GM12878 (cell line): ENCODE measurements at regions of chr12 and their contacts with region 1.

Region 1: DNA sequence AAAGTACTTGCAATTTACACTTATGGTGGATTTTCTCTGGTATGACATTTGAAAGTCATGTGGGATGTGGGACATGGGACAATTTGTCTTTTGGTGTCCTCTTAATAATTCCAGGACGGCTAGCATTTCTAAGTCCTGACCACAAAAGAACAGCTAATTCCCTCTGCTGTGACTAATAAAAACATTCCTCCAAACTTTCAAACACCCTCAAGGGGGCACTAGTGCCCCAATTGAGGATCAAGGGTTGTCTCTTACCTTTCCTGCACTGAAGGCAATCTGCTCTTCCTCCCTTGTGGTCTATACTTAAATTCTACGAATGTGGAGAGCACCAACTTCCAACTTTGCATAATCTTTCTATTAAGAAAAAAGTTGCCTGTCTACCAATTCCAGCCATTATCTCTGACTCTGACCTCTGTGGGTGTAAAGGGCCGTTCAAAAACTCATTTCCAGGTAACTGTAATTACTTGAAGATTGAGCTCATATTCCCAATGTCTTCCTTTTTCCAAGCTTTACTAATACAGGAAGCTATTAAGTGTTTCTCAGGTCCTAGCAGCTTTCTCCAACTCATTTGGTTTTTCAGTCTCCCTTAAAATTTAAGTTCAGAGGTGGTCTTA is 210.2 kb downstream of the PTPRO start:
- DNase-seq: peak; percentile 36
- ATAC-seq: peak; percentile 89
- H3K4me3 ChIP-seq: no peak overlapping the region
- H3K27ac ChIP-seq: no peak overlapping the region
- H3K4me1 ChIP-seq: no peaks in the 10 kb centered on the region; the same call in 1 of the 2 replicates
- H3K27me3 ChIP-seq: no peaks in the 10 kb centered on the region; a peak in 1 of 4 replicates
- CTCF ChIP-seq: peak; percentile 57 to 89 (median 62)
- EP300 ChIP-seq: no peak
- POLR2A ChIP-seq: no peak
- RAD21 ChIP-seq: peak; percentile 98

Region 2: DNA sequence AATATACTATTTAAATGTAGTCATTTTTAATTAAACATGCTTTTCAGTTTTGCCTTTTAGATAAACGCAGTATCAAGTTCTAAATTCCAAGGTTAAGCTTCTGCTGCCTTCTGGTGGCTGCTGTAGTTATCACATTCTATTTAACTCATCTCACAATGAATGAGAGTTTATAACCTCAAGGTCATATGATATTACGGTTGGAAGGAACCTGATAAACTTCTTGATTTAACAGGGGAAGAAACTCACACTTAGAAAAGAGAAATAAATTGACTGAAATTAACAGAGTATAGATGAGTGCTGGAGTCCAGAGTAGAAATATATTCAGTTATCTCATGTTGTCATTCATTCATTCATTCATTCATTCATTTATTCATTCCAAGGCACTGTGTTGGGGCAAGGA is 868.0 kb before region 1 on chr12:
- CTCF ChIA-PET with region 1: no interaction called
- POLR2A ChIA-PET with region 1: no interaction called
- RAD21 ChIA-PET with region 1: no interaction called
- SMC1A ChIA-PET with region 1: no interaction called
- in situ Hi-C with region 1: no loop called
- intact Hi-C with region 1: no loop called
- DNase-seq: no peak
- ATAC-seq: peak; percentile 71
- H3K4me3 ChIP-seq: no peak overlapping the region
- H3K27ac ChIP-seq: no peak overlapping the region
- H3K4me1 ChIP-seq: no peaks in the 10 kb centered on the region
- H3K27me3 ChIP-seq: no peaks in the 10 kb centered on the region
- CTCF ChIP-seq: peak; percentile 50 to 72 (median 56); a peak in 5 of 6 replicates
- EP300 ChIP-seq: no peak
- POLR2A ChIP-seq: no peak
- RAD21 ChIP-seq: peak; percentile 93

Region 3: DNA sequence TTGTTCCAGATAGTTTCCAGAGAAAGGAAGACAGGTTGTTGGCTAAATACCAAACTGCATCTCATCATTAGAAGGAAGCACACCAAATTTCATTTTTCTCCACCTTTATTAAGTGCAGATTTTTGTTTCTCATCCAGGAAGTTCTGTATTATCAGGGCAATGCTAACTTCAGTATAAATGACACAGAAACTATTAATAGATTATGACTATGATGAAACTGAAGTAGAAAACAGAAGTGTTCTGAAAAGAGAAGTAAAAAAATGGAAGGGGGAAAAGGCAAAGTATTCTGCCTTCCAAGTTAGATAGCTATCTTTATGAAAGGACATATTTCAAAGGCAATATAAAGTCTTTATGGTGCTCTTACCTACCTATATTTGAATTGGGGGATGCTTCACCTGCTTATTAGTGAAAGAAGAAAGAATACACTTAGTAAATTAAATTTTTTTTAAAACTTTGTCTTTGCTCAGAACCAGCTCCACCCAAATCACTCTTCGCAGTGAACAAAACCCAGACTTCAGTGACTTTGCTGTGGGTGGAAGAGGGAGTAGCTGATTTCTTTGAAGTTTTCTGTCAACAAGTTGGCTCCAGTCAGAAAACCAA is 13.7 kb after region 1 on chr12:
- CTCF ChIA-PET with region 1: interaction called, 116 read pairs
- POLR2A ChIA-PET with region 1: interaction called, 11 read pairs
- RAD21 ChIA-PET with region 1: interaction called, 44 read pairs
- SMC1A ChIA-PET with region 1: interaction called, 47 read pairs
- in situ Hi-C with region 1: no loop called
- intact Hi-C with region 1: no loop called
- DNase-seq: peak; percentile 25
- ATAC-seq: peak; percentile 87
- H3K4me3 ChIP-seq: peak overlapping the region; percentile 52
- H3K27ac ChIP-seq: peak overlapping the region; percentile 66
- H3K4me1 ChIP-seq: peaks cover 19% of the 10 kb centered on the region
- H3K27me3 ChIP-seq: no peaks in the 10 kb centered on the region
- CTCF ChIP-seq: no peak
- EP300 ChIP-seq: no peak
- POLR2A ChIP-seq: no peak
- RAD21 ChIP-seq: no peak

Region 4: GRCh38 chr12:15575671-15576541 is 43.4 kb after region 1 on chr12:
- CTCF ChIA-PET with region 1: interaction called, 1,078 read pairs
- POLR2A ChIA-PET with region 1: interaction called, 7 read pairs
- RAD21 ChIA-PET with region 1: interaction called, 50 read pairs
- SMC1A ChIA-PET with region 1: interaction called, 853 read pairs
- in situ Hi-C with region 1: loop called (anchors 5 kb)
- intact Hi-C with region 1: loop called (anchors 1 kb)
- DNase-seq: no peak
- ATAC-seq: no peak
- H3K4me3 ChIP-seq: no peak overlapping the region
- H3K27ac ChIP-seq: no peak overlapping the region
- H3K4me1 ChIP-seq: peaks cover 7% of the 10 kb centered on the region
- H3K27me3 ChIP-seq: no peaks in the 10 kb centered on the region
- CTCF ChIP-seq: no peak
- EP300 ChIP-seq: no peak
- POLR2A ChIP-seq: no peak
- RAD21 ChIP-seq: no peak

Region 5: DNA sequence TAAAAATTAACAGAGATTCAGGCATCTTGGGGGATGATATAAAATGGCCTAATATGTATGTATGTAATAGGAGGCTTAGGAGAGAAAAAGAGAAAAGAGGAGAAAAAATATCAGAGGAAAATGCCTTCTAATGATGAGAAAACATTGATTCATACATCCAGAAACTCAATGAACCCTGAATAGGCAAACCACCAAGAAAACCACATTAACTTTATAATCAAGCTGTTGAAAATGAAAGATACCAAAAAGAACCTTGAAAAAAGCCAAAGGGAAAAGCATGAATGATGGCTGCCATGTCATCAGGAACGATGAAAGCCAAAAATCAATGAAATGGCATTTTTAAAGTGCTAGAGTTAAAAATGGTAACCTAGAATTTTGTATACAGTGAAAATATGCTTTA is 76.5 kb after region 1 on chr12:
- CTCF ChIA-PET with region 1: interaction called, 5 read pairs
- POLR2A ChIA-PET with region 1: no interaction called
- RAD21 ChIA-PET with region 1: interaction called, 10 read pairs
- SMC1A ChIA-PET with region 1: interaction called, 3 read pairs
- in situ Hi-C with region 1: no loop called
- intact Hi-C with region 1: no loop called
- DNase-seq: no peak
- ATAC-seq: no peak
- H3K4me3 ChIP-seq: no peak overlapping the region
- H3K27ac ChIP-seq: no peak overlapping the region
- H3K4me1 ChIP-seq: no peaks in the 10 kb centered on the region
- H3K27me3 ChIP-seq: no peaks in the 10 kb centered on the region
- CTCF ChIP-seq: no peak
- EP300 ChIP-seq: no peak
- POLR2A ChIP-seq: no peak
- RAD21 ChIP-seq: no peak

Region 6: GRCh38 chr12:15863984-15864383 is 331.5 kb after region 1 on chr12:
- CTCF ChIA-PET with region 1: interaction called, 84 read pairs
- POLR2A ChIA-PET with region 1: no interaction called
- RAD21 ChIA-PET with region 1: interaction called, 48 read pairs
- SMC1A ChIA-PET with region 1: interaction called, 45 read pairs
- in situ Hi-C with region 1: no loop called
- intact Hi-C with region 1: no loop called
- DNase-seq: peak; percentile 67
- ATAC-seq: peak; percentile 94
- H3K4me3 ChIP-seq: no peak overlapping the region
- H3K27ac ChIP-seq: no peak overlapping the region
- H3K4me1 ChIP-seq: no peaks in the 10 kb centered on the region
- H3K27me3 ChIP-seq: no peaks in the 10 kb centered on the region
- CTCF ChIP-seq: no peak
- EP300 ChIP-seq: no peak
- POLR2A ChIP-seq: no peak
- RAD21 ChIP-seq: no peak

Region 7: DNA sequence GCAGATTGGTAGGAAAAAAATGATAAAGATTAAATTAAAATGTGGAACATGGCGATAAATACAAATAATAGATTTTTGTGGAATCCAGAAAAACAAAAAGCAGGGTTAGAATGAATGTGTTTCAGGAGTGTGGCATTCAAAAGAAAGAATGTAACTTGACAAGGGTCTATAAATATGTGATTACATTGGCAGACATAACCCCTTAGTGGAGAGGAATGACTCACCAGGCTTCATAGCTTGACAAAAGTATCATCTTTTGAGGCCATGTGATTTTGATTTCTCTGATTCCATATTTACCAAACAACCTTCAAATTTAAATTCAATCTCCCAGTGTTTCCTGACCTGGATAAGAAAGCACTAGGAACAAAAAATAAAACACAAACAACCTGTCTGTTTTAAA is 790.5 kb after region 1 on chr12:
- CTCF ChIA-PET with region 1: no interaction called
- POLR2A ChIA-PET with region 1: no interaction called
- RAD21 ChIA-PET with region 1: no interaction called
- SMC1A ChIA-PET with region 1: no interaction called
- in situ Hi-C with region 1: no loop called
- intact Hi-C with region 1: no loop called
- DNase-seq: no peak
- ATAC-seq: no peak
- H3K4me3 ChIP-seq: no peak overlapping the region
- H3K27ac ChIP-seq: no peak overlapping the region
- H3K4me1 ChIP-seq: no peaks in the 10 kb centered on the region
- H3K27me3 ChIP-seq: no peaks in the 10 kb centered on the region
- CTCF ChIP-seq: no peak
- EP300 ChIP-seq: no peak
- POLR2A ChIP-seq: no peak
- RAD21 ChIP-seq: no peak